Activated T-helper 1 cell treated with anti-CD3 and anti-CD28 coated beads, Interleukin-12 subunit alpha, Interleukin-12 subunit beta, Interleukin-2, Interleukin-4 antibody, amounts not matched to agents 30 ng/mL and 10 ng/mL and 1 ng/mL, durations not matched to agents 14 hours and 24 hours and 36 hours (primary cell): ENCODE measurements at regions of chr15 and their contacts with region 1.

Region 1: GRCh38 chr15:72982714-72983113 is 69.5 kb upstream of the NEO1 start:
- DNase-seq: no peak
- H3K4me3 Mint-ChIP-seq: no peak overlapping the region
- H3K27ac Mint-ChIP-seq: no peak overlapping the region
- H3K4me1 Mint-ChIP-seq: no peaks in the 10 kb centered on the region
- H3K27me3 Mint-ChIP-seq: peaks cover 11% of the 10 kb centered on the region

Region 2: DNA sequence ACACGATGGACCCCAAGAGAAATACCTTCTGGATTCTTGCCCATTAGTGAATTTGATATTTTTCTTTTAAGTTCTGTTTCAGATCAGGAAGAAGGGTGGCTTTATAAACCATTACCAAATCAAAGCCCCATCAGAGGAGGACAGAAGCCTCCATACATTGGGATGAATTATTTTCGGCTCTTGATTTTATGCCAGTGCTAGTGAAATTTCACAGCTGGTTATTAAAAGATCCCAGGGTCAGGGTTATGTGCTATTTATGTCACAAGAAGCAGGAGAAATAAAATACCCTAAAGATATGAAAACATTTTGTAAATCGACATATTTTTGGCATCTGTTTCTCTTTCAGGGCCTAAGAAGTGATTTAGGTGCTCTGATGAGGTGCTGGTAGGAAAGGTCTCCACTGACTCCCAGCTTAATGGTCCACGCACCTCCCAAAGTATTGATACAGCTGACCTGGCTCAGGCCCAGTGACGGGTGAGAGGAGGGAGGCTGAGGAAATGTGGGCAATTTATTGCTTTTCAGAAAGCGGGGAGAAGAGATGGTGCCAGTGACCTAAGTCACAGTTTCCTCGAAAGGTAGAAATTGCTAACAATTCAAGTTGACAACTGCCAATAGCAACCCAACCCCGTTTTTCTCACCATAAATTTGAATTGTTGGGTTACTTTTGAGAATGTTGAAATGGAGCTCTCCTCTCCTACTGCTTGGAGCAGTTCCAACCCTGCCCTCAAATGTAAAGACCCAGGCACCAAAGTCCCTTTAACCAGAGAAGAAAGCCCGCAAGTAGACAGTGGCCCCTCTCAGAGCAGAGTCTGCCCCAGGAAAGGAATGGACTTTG is 1487.9 kb before region 1 on chr15:
- intact Hi-C with region 1: loop called (anchors 5 kb)
- DNase-seq: no peak
- H3K4me3 Mint-ChIP-seq: no peak overlapping the region
- H3K27ac Mint-ChIP-seq: no peak overlapping the region
- H3K4me1 Mint-ChIP-seq: no peaks in the 10 kb centered on the region
- H3K27me3 Mint-ChIP-seq: peaks cover 3% of the 10 kb centered on the region

Region 3: DNA sequence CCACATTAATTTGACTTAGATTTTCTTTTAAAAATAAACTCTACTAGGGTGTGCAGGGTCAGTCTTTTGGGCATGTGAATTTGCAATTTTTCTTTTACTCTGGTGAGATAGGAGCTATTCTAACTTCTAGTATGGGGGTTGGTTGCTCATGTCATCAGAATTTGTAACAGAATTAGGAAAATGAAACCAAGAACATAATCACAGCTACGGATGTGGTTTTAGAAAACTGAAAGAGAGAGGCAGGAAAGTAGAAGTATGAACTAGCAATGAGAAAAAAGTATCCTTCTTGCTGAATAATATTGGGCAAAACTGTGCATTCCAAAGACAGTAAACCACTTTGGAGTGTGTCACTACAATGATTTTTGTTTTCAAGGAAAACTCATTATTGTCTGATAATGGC is 242.5 kb before region 1 on chr15:
- intact Hi-C with region 1: no loop called
- DNase-seq: no peak
- H3K4me3 Mint-ChIP-seq: peak overlapping the region; percentile 26
- H3K27ac Mint-ChIP-seq: peak overlapping the region; percentile 41
- H3K4me1 Mint-ChIP-seq: peaks cover 39% of the 10 kb centered on the region
- H3K27me3 Mint-ChIP-seq: no peaks in the 10 kb centered on the region